AG04450 (cell line): ENCODE measurements at regions of chr20 and their contacts with region 1.

Region 1: DNA sequence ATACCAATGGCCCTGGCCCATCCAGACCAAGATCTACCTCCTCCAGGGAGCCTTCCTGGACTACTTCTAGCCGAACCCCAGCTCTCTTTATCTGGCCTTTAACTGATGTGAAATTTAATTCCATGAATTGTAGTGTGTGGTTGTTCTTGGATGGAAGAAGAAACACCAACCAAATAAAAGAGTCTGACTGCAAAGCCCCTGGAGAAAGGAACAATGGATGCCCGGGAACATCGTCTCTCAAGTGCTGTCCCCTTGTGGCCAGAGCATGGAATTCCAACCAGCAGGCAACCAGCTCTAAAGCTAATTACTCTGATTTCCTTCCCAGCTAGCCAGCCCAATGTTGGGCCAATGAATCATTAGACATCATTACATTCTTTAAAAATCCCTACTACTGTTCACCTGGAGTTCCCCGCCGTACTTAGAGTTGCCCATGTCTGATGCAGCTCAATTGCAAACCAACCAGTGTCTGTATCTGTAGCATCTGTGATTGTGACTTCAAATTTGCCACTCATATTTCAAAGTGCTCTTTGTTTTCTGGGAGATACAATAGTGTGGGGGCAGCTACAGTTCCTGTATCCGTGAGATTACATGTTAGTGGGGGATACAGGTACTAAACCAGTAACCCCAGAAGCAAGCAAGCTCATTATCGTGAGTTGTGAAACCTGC is 141.1 kb downstream of the ANKRD60 start:
- DNase-seq: no peak
- H3K4me3 ChIP-seq: no peak overlapping the region
- H3K27ac ChIP-seq: no peak overlapping the region
- H3K27me3 ChIP-seq: peaks cover 2% of the 10 kb centered on the region
- CTCF ChIP-seq: peak; percentile 77

Region 2: DNA sequence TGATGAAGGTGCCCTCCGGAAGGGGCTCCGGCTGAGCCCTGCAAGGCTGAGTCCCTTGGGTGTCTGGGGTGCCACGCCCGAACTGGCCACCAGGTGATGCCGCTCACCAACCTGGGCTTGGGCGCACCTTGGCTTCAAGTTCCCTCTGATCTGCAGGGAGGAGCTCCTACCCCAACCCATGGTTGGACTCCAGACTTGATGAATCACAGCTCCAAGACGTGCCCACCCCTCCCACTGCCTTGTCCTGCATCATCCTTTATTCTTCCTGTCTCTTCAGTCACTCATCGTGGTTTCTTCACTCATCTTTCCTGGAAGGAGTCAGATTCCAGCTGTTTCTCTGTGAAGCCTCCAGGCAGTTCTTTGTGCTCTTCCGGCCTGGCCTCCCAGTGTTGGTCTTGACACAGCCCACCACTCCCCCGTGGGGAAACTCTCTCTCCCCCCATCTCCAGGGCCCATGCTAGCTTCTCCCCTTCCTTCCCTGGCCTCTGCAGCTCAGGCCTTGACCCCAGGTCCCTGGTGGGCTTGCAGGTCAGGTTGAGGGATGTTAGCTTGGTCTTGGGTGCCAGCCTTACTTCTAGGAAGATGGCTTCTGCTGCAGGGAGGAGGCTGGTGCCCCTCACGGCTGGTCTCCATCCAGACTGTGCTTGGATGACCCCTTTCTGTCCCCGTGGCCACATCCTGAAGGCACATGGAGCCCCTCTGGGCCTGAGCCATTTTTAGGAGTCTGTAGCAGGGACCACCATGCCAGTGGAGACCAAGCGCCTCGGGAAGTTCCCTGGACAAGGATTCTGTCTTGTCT is 464.5 kb before region 1 on chr20:
- CTCF ChIA-PET with region 1: interaction called, 16 read pairs
- POLR2A ChIA-PET with region 1: no interaction called
- DNase-seq: no peak
- H3K4me3 ChIP-seq: no peak overlapping the region
- H3K27ac ChIP-seq: no peak overlapping the region
- H3K27me3 ChIP-seq: no peaks in the 10 kb centered on the region
- CTCF ChIP-seq: peak; percentile 70

Region 3: DNA sequence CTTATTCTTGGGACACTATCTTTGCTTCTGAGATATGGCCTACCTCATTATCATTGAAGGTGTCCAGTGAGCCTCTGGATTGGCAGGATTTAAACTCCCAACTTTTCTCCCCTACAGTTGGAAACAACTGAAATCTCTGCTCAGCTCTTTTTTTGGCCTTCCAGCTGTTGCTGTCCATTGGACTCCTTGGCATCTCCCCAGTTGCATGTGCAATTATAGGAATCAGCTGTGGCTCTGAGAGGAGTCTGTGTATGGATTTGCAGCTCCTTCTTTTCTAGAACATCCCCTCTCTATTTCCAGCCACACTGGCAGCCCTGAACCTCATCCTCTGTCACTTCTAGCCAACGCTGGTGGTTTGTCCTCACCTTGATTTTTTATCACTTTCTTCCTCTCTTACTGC is 243.4 kb after region 1 on chr20:
- CTCF ChIA-PET with region 1: no interaction called
- POLR2A ChIA-PET with region 1: no interaction called
- DNase-seq: no peak
- H3K4me3 ChIP-seq: no peak overlapping the region
- H3K27ac ChIP-seq: no peak overlapping the region
- H3K27me3 ChIP-seq: no peaks in the 10 kb centered on the region
- CTCF ChIP-seq: no peak